ENCODE measurements at regions of chr2 and their contacts with region 1.

Region 1: DNA sequence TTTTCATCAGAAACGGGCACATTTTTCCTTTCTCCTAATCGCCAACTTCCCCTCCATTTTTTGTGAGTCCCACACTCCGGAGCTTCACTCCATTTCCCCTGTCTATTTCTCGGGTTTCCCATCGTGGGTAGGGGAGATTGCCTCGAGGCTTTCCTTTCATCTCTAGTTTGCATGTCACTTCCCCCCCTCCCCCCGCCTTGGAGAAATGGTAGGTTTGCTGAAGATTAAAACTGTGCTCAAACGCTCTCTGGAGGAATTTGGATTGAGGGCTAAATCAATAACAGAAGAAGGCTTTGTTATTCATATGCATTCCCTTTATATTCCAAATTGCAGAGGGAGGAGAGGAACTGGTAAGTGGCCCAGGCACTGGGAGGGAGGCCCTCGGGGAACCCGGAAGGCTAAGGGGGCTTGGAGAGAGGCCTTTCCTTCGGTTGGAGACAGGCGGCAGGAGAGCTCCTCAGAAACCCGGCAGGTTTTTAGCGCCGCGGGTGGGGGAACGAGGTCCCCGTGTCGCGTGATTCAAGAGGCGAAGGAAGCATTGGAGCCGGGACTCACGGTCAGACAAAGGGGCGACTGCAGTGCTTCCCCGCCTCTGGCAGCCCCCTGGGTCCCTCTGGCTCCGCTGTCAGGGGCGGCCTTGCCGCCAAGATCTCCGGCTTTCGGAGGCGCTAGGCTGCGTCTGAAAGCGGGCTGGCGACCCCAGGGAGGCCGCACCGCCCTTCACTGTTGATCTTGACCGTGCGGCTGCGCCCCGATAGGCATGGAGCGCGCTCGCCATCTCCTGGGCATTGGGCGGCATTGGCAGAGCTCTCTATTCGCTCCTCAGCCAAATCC is 2.4 kb upstream of the HOXD12 start:
- DNase-seq: peak; percentile 79
- CTCF ChIP-seq: peak; percentile 74

Region 2: DNA sequence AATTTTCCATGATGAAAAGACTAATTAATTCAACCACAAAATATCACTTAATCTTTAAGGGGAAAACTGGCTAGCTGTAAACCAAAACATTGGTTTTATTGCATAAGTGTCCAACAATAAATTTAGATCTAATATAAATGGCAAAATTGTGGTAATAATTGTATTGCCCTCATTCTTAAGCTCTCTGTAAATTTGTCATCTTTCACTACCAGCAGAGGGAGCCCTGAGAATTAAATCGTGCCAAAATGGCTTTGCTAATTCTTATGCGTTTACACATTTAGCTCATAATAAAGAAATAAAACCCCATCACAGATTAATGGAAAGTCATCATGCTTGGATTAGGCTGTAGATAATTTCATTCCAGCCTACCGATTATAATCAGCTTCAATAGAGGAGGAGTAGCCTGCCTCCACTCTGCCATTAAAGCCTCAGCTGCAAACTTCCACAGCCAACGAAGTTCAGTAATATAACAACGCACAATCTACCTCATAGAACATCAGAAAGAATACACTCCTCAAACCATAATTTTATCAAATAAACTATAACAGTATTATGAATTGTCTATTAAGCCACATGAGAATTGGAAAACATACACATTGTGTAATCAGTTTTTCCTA is 845.7 kb before region 1 on chr2:
- CTCF ChIA-PET with region 1: interaction called, 22 read pairs
- POLR2A ChIA-PET with region 1: no interaction called
- DNase-seq: peak; percentile 28
- CTCF ChIP-seq: peak; percentile 60

Region 3: DNA sequence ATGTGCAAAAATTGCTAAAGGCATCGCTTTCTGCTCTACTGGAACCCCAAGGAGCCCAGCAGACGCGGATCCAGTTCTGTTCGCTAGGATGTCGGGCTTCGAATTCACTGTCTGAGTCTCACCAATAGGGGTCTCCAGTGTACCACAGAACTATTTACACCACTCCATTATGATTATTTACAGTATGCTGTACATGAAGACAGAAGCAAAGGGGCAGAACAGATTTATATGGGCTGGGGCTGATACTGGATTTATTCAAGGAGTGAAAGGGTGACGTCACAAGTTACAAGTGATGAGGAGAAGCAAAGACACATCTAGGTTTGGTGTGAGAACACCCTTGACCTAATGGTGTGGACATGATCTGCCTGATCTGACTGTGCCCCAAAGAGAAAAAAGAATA is 730.4 kb before region 1 on chr2:
- CTCF ChIA-PET with region 1: interaction called, 12 read pairs
- POLR2A ChIA-PET with region 1: no interaction called
- DNase-seq: peak; percentile 16
- CTCF ChIP-seq: peak; percentile 65

Region 4: DNA sequence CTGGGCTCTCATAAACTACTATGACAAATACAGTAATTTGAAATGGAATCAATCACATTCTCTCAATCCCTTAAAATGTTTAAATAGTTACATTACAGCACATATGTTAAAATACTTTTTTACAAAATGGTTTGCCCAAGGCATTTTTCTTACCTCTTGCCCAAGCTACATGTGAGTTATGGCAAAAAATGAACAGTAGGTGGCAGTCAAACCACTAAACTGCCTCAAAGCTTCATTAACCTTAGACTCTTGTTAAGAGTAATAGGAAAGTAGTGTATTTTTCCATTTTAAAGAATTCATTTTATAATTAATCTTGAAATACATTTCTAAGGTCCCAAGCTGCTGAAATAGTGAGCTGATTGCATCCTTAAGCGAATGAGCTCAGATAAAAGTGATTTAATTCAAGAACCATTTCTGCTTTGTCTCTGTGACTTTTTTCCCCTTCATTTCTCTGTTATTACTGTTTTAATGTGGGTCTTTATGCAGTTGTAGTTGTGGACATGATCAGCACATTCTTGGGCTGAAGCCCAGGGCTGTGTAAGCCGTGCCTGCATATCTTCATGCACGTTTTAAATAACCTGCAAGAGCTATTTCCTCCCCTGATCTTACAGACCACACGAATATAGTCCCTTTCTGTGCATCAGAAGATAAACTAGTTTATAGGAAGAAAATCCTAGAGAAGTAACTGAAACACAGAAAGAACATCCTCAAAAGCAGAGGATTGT is 406.9 kb before region 1 on chr2:
- CTCF ChIA-PET with region 1: interaction called, 96 read pairs
- POLR2A ChIA-PET with region 1: no interaction called
- DNase-seq: peak; percentile 20
- CTCF ChIP-seq: peak; percentile 69

Region 5: DNA sequence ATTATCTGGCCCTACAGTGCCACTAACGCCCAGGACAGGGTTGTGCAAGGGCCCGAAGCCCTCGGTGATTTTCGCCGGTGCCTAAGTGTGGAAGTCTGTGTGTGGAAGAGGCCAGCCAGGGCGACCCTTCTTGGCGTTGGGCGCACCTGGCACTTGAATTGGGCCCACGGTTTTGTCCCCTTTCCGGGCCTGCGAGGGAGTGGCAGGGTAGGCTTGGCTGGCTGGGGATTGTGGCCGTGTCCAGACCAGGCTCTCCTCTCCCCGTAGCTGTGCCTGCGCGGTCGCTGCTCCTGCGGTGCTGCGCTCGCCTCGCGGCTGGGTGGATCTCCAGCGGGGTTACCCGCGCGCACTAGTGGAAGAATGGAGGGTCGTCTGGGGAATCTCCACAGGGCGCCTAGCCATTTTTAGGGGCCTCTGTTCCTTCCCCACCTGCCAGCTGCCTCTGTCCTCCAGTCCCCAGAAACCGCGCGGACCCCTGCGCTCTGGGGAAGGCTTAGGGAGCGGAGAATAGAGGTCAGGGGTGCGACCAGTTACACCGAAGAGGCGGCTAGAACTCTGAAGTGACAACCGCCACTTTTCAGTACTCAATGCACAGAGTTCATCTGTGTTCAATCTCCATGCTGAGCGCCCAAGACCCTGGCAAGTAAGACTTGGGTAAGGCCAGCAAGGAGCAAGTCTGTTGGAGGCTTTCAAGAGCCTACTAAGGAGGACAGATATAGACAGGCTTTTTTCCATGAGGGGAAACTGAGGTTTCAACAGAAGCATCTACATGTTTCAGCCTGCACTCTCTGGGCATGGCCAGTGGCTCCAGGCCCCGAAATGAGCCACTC is 29.4 kb before region 1 on chr2:
- CTCF ChIA-PET with region 1: no interaction called
- POLR2A ChIA-PET with region 1: no interaction called
- DNase-seq: peak; percentile 5
- CTCF ChIP-seq: no peak

Region 6: DNA sequence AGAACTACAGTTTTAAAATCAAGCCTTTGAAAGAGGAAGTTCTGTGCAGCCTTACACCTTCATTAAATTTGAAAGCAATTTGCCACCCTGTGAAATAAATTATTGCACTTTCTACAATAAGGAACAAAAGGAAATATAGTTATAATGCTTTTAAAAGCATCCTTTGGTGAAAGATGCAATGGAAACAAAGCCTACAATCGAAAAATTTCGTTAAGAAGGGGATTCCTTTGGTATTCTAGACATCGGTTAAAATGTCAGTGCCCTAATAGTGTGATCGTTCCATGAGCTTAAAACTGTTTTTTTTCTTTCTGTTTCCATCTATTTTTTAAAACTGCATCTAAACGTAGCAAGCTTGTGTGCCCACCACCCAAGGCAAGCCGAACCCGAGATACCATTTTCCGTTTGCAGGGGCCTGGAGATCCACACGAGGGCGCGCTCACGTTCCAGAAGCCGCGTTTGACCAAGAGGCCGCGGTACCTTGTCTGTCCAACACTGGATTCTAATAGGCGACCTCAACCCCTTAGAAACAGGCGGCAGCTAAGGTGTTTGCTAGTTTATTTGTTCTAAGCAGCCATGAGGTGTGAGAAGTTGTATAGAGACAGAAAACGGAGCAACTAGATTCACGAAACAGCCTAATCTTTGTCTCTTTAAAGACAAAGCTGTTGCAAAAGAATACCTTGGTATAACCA is 13.9 kb after region 1 on chr2:
- CTCF ChIA-PET with region 1: interaction called, 19 read pairs
- POLR2A ChIA-PET with region 1: no interaction called
- DNase-seq: peak; percentile 57
- CTCF ChIP-seq: peak; percentile 60

Measured in GM10248 (cell line).